ENCODE measurements at regions of chr11 and their contacts with region 1.

Region 1: DNA sequence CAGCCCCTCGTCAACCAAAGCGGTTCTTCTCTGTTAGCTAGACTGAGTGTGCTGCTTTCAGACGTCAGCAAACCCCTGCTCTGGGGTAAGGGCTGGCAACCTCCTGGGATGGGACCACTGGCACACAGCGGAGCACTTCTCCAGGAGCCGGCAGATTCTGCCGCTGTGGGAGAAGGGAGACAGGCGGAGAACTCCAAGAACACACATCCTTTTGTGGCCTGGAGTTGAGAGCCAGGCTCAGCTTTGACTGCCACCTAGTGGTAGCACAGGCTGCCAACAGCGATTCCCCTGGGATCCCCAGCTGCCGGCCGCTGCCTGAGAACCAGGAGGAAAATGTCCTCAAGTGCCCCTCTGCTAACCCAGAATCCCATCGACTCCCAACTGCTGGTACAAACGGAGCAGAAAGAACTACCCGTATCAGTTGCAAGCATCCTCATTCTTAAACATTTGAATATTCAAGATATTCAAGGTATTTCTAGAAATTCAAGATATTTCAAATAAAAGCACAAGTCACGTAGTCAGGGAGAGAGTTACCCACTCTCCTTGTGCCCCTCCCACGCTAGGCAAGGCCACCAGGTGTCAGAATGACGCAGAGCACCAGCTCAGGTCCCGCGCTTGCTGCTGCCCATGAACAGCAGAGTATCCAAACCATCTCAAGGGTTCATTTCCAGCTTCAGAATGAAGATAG is 4.9 kb downstream of the LTO1 start:
- DNase-seq: peak; percentile 83
- H3K4me3 ChIP-seq: no peak overlapping the region
- H3K27ac ChIP-seq: no peak overlapping the region
- H3K4me1 ChIP-seq: peaks cover 9% of the 10 kb centered on the region
- H3K27me3 ChIP-seq: no peaks in the 10 kb centered on the region
- CTCF ChIP-seq: peak; percentile 94 to 97
- POLR2A ChIP-seq: peak; percentile 45

Region 2: DNA sequence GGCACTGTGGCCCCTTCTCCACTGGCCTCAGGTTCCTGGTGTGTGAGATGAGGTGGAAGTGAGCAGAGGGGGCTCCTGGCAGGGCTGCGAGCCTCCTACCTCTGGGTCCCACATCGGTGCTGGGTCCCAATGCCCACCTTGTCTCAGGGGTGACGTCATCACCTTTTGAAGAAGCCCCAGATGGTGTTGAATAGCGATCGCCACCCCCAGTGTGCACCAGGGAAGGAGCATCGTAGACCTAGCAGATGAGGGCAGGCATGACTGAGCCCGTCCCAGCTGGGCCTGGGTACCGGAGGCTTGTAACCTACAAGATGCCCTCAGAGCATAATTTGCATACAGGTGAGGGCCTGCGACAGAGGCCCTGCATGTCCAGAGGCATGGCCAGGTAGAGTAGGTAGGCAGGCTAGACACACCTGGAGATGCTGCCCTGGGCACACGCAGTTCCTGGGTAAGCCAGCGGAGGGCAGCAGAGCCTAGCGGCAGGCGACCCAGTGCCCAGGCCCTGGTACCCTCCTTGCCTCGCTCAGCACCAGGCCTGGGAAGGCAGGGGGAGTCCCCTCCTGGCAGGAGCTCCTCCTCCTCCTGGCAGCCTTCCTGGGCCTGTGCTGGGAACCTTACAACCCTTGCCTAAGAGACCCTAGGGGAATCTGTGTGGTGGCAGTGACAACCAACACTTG is 569.0 kb before region 1 on chr11:
- CTCF ChIA-PET with region 1: interaction called, 137 read pairs
- POLR2A ChIA-PET with region 1: interaction called, 3 read pairs
- dilution Hi-C with region 1: loop called (anchors 25 kb)
- intact Hi-C with region 1: loop called (anchors 1 kb)
- DNase-seq: peak; percentile 71
- H3K4me3 ChIP-seq: no peak overlapping the region
- H3K27ac ChIP-seq: no peak overlapping the region
- H3K4me1 ChIP-seq: peaks cover 5% of the 10 kb centered on the region
- H3K27me3 ChIP-seq: peaks cover 0 to 2% of the 10 kb centered on the region in 2 experiments
- CTCF ChIP-seq: peak; percentile 98 to 99
- POLR2A ChIP-seq: peak; percentile 37

Region 3: DNA sequence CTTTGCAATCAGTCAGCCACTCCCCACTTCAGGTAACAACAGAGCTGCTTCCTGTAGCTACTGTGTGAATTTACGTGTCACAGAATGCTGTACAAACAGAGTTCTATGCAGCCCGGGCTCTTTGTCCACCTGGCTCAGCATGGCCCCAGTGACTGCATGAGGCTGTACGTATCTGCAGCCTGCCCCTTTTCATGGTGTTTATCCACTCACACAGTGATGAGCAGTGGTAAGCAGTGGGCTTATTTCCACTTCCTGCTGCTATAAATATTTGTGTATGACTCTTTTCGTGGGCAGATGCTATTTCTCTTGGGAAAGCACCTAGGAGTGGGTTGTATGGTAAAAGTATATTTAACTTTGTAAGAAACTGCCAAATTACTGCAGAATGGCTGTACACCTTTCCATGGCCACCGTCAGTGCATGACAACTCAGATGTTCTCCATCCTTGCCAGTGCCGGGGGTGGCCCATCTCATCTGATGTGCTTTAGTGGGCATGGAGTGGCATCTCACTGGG is 333.0 kb before region 1 on chr11:
- CTCF ChIA-PET with region 1: no interaction called
- POLR2A ChIA-PET with region 1: no interaction called
- dilution Hi-C with region 1: no loop called
- intact Hi-C with region 1: no loop called
- DNase-seq: no peak
- H3K4me3 ChIP-seq: no peak overlapping the region
- H3K27ac ChIP-seq: no peak overlapping the region
- H3K4me1 ChIP-seq: no peaks in the 10 kb centered on the region
- H3K27me3 ChIP-seq: no peaks in the 10 kb centered on the region
- CTCF ChIP-seq: no peak
- POLR2A ChIP-seq: no peak

Region 4: GRCh38 chr11:69654569-69655327 is 15.6 kb before region 1 on chr11:
- CTCF ChIA-PET with region 1: interaction called, 47 read pairs
- POLR2A ChIA-PET with region 1: no interaction called
- dilution Hi-C with region 1: no loop called
- intact Hi-C with region 1: no loop called
- DNase-seq: no peak
- H3K4me3 ChIP-seq: no peak overlapping the region
- H3K27ac ChIP-seq: no peak overlapping the region
- H3K4me1 ChIP-seq: peaks cover 3% of the 10 kb centered on the region
- H3K27me3 ChIP-seq: no peaks in the 10 kb centered on the region
- CTCF ChIP-seq: no peak
- POLR2A ChIP-seq: no peak

Region 5: DNA sequence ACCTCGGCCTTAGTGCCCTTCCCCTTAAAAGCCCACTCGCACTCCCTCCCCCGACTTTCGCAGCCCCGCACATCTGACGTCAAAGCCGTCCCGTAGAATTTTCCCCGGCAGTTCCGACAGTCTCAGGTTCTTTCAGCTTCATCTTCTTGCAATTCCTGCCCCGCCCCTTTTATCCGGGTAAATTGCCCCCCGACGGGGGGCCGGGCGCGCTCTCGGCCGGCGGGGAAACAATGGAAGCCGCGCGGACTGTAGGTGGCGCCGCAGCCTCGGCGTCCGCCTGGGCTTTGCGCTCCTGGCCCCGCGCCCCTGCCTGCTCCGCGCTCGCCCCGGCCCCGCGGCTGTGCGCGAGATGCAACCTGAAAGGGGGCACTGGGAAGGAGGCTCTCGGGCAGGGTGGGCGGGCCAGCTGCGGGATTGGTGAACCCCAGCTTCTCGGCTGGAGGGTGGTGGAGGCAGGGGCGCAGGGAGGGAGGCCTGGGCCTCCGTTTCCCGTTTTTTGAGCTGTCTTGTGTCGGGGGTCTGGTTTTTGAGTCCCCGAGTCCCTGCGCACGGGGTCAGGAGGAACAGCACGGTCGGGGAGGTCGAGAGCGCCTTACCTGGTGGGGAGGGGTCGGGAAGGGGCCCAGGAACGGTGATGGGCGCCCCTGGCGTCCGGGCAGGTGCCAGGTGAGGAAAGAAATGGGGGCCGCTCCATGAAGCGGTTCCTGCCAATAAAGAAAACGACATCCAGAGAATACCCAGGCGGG is 34.4 kb after region 1 on chr11:
- CTCF ChIA-PET with region 1: no interaction called
- POLR2A ChIA-PET with region 1: no interaction called
- dilution Hi-C with region 1: no loop called
- intact Hi-C with region 1: no loop called
- DNase-seq: no peak
- H3K4me3 ChIP-seq: no peak overlapping the region
- H3K27ac ChIP-seq: no peak overlapping the region
- H3K4me1 ChIP-seq: peaks cover 8% of the 10 kb centered on the region
- H3K27me3 ChIP-seq: peaks cover 55 to 60% of the 10 kb centered on the region in 2 experiments
- CTCF ChIP-seq: peak; percentile 41 to 59
- POLR2A ChIP-seq: no peak

Region 6: GRCh38 chr11:69999721-70000120 is 329.4 kb after region 1 on chr11:
- CTCF ChIA-PET with region 1: no interaction called
- POLR2A ChIA-PET with region 1: no interaction called
- dilution Hi-C with region 1: no loop called
- intact Hi-C with region 1: no loop called
- DNase-seq: no peak
- H3K4me3 ChIP-seq: no peak overlapping the region
- H3K27ac ChIP-seq: no peak overlapping the region
- H3K4me1 ChIP-seq: no peaks in the 10 kb centered on the region
- H3K27me3 ChIP-seq: no peaks in the 10 kb centered on the region
- CTCF ChIP-seq: no peak
- POLR2A ChIP-seq: no peak

Measured in endothelial cell of umbilical vein (primary cell).